Activated T-helper 2 cell treated with anti-CD3 and anti-CD28 coated beads, Interferon-gamma antibody, Interleukin-2, Interleukin-4, amounts not matched to agents 10 μg/mL and 5 μg/mL and 100 μg/mL, durations not matched to agents 14 hours and 24 hours and 36 hours (primary cell): ENCODE measurements at regions of chr2 and their contacts with region 1.

Region 1: GRCh38 chr2:239257511-239257937 is 143.3 kb downstream of the HDAC4 start:
- DNase-seq: no peak
- H3K4me3 Mint-ChIP-seq: peak overlapping the region; percentile 42
- H3K27ac Mint-ChIP-seq: peak overlapping the region; percentile 85
- H3K4me1 Mint-ChIP-seq: peaks cover 85% of the 10 kb centered on the region
- H3K27me3 Mint-ChIP-seq: no peaks in the 10 kb centered on the region

Region 2: GRCh38 chr2:239234191-239235175 is 23.0 kb before region 1 on chr2:
- intact Hi-C with region 1: loop called (anchors 2 kb)
- DNase-seq: no peak
- H3K4me3 Mint-ChIP-seq: no peak overlapping the region
- H3K27ac Mint-ChIP-seq: no peak overlapping the region
- H3K4me1 Mint-ChIP-seq: peaks cover 38% of the 10 kb centered on the region
- H3K27me3 Mint-ChIP-seq: no peaks in the 10 kb centered on the region

Region 3: DNA sequence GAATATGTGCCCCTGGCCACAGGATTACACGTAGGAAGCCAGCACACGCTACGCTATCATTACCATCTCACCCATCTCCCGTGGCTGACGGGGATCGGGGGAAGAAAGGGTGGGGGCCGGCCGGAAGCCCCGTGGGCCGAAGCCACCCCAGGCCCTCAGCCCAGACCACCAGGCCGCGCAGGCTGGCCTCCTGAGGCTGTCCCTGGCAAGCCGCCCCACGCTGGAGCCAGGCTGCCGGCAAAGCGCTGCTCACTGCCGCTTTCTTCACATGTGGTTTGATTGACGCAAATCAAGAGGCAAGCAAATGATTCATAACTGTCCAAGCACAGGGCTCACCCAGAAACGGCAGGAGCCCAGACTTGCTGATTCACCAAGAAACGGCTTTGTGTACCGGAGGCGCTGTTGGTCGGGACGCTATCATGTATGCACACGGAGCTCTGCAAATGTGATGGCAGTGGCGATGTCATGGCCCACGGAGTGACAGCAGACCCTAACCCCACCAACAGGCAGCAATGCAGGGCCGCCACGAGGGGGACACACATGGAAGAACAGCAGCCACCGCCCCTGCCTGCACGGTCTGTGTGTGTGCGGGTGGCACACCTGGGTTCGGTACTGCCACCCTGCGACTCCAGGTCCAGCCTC is 17.6 kb after region 1 on chr2:
- intact Hi-C with region 1: loop called (anchors 2 kb)
- DNase-seq: peak; percentile 81
- H3K4me3 Mint-ChIP-seq: peak overlapping the region; percentile 58
- H3K27ac Mint-ChIP-seq: peak overlapping the region; percentile 86
- H3K4me1 Mint-ChIP-seq: peaks cover 69% of the 10 kb centered on the region
- H3K27me3 Mint-ChIP-seq: peaks cover 2% of the 10 kb centered on the region